ENCODE measurements at regions of chr19 and their contacts with region 1.

Region 1: GRCh38 chr19:32971715-32972540 is at the starts of genes CEP89 and FAAP24:
- DNase-seq: peak; percentile 98
- ATAC-seq: peak; percentile 100
- H3K4me3 Mint-ChIP-seq: peak within 1 kb of the TSS; percentile 98
- H3K27ac Mint-ChIP-seq: peak within 1 kb of the TSS; percentile 94
- H3K4me1 Mint-ChIP-seq: peaks cover 11% of the 10 kb centered on the region
- H3K27me3 Mint-ChIP-seq: no peaks in the 10 kb centered on the region
- total RNA-seq, gene CEP89: 16.2 to 18.5 TPM
- total RNA-seq, gene FAAP24: 8.9 to 11.9 TPM

Region 2: GRCh38 chr19:32580901-32581703 is 390.8 kb before region 1 on chr19 and contains the start of gene PDCD5:
- CTCF ChIA-PET with region 1: no interaction called
- POLR2A ChIA-PET with region 1: no interaction called
- intact Hi-C with region 1: loop called in 1 of 2 experiments (anchors 1 kb)
- DNase-seq: peak; percentile 99
- ATAC-seq: peak; percentile 90
- H3K4me3 Mint-ChIP-seq: peak within 1 kb of the TSS; percentile 92
- H3K27ac Mint-ChIP-seq: peak within 1 kb of the TSS; percentile 91
- H3K4me1 Mint-ChIP-seq: peaks cover 33% of the 10 kb centered on the region
- H3K27me3 Mint-ChIP-seq: peaks cover under 1% of the 10 kb centered on the region
- total RNA-seq, gene PDCD5: 268 to 272 TPM

Region 3: GRCh38 chr19:32691291-32691951 is 280.5 kb before region 1 on chr19 and contains the start of gene NUDT19:
- CTCF ChIA-PET with region 1: interaction called, 4 read pairs
- POLR2A ChIA-PET with region 1: interaction called, 8 read pairs
- intact Hi-C with region 1: loop called (anchors 1 to 5 kb)
- DNase-seq: peak; percentile 91
- ATAC-seq: peak; percentile 83
- H3K4me3 Mint-ChIP-seq: peak within 1 kb of the TSS; percentile 83
- H3K27ac Mint-ChIP-seq: peak within 1 kb of the TSS; percentile 92
- H3K4me1 Mint-ChIP-seq: peaks cover 56% of the 10 kb centered on the region
- H3K27me3 Mint-ChIP-seq: no peaks in the 10 kb centered on the region
- total RNA-seq, gene NUDT19: 14.7 to 17.7 TPM

Region 4: GRCh38 chr19:33064792-33065550 is 93.0 kb after region 1 on chr19 and contains the start of gene RHPN2:
- CTCF ChIA-PET with region 1: no interaction called
- POLR2A ChIA-PET with region 1: no interaction called
- intact Hi-C with region 1: loop called in 1 of 2 experiments (anchors 1 kb)
- DNase-seq: peak; percentile 82
- ATAC-seq: peak; percentile 95
- H3K4me3 Mint-ChIP-seq: peak within 1 kb of the TSS; percentile 67
- H3K27ac Mint-ChIP-seq: no peak within 1 kb of the TSS
- H3K4me1 Mint-ChIP-seq: peaks cover 3% of the 10 kb centered on the region
- H3K27me3 Mint-ChIP-seq: peaks cover 28% of the 10 kb centered on the region
- total RNA-seq, gene RHPN2: 5.1 to 5.7 TPM

Region 5: DNA sequence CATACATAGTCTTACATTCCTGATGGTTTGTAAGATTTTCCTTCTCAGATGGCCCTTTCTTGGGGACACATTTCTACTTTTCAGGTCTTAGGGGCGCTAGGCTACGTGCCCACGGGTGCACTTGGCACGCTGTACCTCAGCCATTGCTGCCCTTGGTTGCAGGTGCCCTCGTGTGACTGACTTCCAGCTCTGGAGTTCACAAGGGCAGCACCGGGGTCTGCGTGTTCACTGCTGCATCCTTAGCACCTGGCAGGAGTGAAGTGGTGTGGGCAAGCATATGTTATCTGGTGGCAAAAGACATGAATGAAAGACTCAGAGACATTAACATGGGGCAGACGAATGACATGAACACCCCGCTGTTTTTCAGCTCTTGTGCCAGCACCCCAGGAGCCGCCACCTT is 146.7 kb after region 1 on chr19:
- CTCF ChIA-PET with region 1: interaction called, 4 read pairs
- POLR2A ChIA-PET with region 1: no interaction called
- intact Hi-C with region 1: loop called (anchors 1 kb)
- DNase-seq: no peak
- ATAC-seq: no peak
- H3K4me3 Mint-ChIP-seq: no peak overlapping the region
- H3K27ac Mint-ChIP-seq: no peak overlapping the region
- H3K4me1 Mint-ChIP-seq: no peaks in the 10 kb centered on the region
- H3K27me3 Mint-ChIP-seq: no peaks in the 10 kb centered on the region

Region 6: DNA sequence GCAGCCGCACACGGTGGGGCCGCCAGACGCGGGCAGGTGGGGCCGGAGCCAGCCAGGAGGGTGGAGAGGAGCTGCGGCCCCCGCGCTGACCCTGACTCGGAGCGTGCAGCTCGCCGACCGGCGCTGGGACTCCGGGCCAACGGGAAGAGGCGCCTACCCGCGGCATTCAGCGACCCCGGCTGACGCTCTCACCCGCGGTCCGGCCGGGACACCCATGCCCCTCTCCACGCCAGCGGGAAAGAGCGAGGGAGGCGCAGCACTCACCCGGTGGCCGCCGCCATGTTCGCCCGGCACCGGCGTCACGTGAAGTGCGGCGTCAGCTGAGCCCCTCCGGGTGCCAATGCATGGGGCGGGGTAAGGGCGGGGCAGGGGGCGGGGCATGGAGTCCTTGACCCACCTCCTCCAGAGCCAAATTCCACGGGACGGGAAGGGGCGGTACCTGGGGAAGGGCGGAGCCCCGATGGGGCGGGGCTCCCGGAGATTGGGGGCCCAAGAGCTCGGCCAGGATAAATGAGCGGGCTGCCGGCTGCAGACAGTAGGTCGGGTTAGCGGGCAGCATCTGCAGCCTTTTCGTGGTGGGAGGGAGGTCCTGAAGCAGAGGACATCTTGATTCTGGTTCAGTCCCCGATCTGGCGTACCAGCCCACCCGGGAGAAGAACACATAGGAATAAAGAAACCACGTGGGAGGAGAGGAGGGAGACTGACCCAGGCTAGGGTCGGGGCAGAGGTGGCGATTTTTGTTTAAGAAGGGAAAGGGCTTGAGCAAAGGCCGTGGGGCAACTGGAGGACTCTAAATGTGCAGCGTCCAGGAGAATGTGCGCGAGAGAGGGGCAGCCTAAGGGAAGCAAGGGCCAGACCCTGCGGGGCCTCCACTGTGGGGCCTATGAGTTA is 549.8 kb after region 1 on chr19 and contains the start of gene PEPD:
- CTCF ChIA-PET with region 1: no interaction called
- POLR2A ChIA-PET with region 1: no interaction called
- intact Hi-C with region 1: loop called in 1 of 2 experiments (anchors 5 kb)
- DNase-seq: peak; percentile 95
- ATAC-seq: peak; percentile 97
- H3K4me3 Mint-ChIP-seq: peak within 1 kb of the TSS; percentile 89
- H3K27ac Mint-ChIP-seq: peak within 1 kb of the TSS; percentile 60
- H3K4me1 Mint-ChIP-seq: peaks cover 20% of the 10 kb centered on the region
- H3K27me3 Mint-ChIP-seq: no peaks in the 10 kb centered on the region
- total RNA-seq, gene PEPD: 26.9 to 37.4 TPM